ENCODE measurements at regions of chr21 and their contacts with region 1.

Region 1: DNA sequence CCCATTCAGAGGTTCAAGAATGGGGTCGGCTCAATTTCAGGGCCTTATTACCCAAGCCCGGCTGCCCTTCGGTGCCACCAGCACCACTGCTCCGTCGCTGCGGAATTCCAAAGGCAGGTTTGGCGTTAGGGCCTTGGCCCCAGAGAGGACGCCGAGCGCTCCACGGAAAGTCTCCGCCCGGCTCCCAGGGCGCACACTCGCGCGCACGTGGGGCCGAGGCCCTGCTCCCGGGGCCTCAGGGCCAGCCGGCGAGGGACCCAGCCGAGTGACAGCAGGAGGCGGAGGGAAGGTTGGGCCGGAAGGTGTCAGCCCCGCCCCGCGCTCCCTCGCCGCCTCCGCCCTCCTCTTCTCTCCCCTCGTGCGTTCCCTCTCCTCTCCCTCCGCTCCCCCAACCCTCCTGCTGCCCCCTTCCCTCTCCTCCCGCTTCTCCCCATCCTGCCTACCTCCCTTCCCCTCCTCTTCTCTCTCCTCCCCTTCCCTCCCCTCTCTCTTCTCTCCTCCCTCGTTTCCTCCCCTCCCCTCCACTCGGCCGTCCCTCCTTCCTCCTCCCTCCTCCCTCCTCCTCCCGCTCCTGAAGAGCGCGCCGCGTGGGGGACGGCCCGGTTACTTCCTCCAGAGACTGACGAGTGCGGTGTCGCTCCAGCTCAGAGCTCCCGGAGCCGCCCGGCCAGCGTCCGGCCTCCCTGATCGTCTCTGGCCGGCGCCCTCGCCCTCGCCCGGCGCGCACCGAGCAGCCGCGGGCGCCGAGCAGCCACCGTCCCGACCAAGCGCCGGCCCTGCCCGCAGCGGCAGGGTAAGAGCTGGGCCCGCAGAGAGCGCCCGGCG is at the start of gene ETS2:
- DNase-seq: peak; percentile 97
- total RNA-seq, gene ETS2: 87.3 to 92.3 TPM

Region 2: DNA sequence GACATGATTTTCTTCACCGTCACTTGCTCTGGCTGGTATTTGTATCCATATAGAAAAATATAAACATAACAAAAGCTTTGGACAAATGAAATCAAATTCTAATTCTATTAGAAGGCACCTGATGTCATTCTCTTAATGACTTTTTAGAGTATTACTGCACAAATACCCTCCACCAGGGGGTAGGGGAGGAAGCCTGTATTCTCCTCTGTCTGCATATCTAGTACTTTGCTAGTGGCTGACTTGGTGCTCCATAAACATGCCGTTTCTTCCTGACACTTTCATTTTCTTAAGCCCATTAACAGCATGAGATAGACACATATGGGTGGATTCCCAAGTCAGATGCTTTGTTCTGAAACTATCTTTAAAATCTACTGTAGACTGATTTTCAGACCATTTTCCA is 569.3 kb before region 1 on chr21:
- intact Hi-C with region 1: no loop called
- DNase-seq: no peak

Region 3: GRCh38 chr21:38755681-38756371 is 49.7 kb before region 1 on chr21:
- intact Hi-C with region 1: loop called in 1 of 2 experiments (anchors 10 kb)
- DNase-seq: peak; percentile 86

Region 4: DNA sequence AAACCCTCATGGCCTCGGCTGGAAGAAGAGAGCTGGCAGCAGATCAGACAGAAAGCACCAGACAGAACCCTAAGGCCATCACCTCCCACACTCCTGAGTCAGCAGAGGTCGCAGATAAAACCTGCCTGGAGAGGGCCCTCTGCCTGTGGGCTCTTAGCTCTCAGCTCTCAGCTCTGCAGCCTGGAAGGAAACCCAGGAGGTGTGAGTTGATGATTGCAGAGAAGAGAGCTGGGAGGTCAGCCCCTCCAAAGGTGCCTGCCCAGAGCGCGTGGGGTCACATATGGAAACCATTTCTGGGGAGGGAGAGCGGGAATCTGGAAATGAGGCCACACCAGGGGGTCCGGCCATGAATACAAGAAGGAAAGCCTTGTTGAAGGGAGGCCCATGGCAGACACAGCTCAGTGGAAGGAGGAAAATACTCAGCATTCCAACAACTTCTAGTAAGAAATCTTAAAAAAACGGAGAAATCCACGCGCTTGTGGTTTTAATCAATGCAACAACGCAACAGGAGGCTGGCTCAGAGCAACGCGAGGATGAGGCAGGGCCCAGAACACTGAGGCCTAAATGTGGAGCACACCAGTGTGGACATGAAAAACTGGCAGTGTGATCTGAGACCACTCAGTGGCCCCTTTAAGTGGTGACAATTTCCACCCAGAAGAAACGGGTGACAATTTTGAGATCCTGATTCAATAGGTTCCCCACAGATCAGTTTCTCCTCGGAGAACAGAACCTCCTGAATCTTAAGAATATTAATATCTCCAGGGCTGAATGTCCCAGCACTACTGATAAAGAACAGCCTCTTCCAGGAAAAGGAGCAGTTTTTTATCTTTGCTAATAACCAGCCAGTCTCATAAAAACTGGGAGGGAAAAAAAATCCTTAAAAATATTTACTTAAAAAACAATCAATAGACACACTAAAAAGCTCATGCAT is 332.0 kb after region 1 on chr21:
- intact Hi-C with region 1: loop called in 1 of 2 experiments (anchors 10 kb)
- DNase-seq: no peak

Region 5: GRCh38 chr21:40186045-40186444 is 1380.5 kb after region 1 on chr21:
- intact Hi-C with region 1: no loop called
- DNase-seq: no peak

Measured in posterior vena cava (tissue), 2 donors.